OCI-LY7 (cell line): ENCODE measurements at regions of chr1 and their contacts with region 1.

Region 1: GRCh38 chr1:151924679-151925587 is 15.6 kb upstream of the THEM4 start:
- DNase-seq: no peak
- H3K4me3 ChIP-seq: no peak overlapping the region
- H3K27ac ChIP-seq: no peak overlapping the region
- H3K4me1 ChIP-seq: peaks cover 50% of the 10 kb centered on the region
- CTCF ChIP-seq: no peak

Region 2: GRCh38 chr1:151847842-151848596 is 76.9 kb before region 1 on chr1:
- CTCF ChIA-PET with region 1: no interaction called
- POLR2A ChIA-PET with region 1: no interaction called
- intact Hi-C with region 1: loop called (anchors 2 kb)
- DNase-seq: no peak
- H3K4me3 ChIP-seq: no peak overlapping the region
- H3K27ac ChIP-seq: no peak overlapping the region
- H3K4me1 ChIP-seq: peaks cover 19% of the 10 kb centered on the region
- CTCF ChIP-seq: no peak

Region 3: DNA sequence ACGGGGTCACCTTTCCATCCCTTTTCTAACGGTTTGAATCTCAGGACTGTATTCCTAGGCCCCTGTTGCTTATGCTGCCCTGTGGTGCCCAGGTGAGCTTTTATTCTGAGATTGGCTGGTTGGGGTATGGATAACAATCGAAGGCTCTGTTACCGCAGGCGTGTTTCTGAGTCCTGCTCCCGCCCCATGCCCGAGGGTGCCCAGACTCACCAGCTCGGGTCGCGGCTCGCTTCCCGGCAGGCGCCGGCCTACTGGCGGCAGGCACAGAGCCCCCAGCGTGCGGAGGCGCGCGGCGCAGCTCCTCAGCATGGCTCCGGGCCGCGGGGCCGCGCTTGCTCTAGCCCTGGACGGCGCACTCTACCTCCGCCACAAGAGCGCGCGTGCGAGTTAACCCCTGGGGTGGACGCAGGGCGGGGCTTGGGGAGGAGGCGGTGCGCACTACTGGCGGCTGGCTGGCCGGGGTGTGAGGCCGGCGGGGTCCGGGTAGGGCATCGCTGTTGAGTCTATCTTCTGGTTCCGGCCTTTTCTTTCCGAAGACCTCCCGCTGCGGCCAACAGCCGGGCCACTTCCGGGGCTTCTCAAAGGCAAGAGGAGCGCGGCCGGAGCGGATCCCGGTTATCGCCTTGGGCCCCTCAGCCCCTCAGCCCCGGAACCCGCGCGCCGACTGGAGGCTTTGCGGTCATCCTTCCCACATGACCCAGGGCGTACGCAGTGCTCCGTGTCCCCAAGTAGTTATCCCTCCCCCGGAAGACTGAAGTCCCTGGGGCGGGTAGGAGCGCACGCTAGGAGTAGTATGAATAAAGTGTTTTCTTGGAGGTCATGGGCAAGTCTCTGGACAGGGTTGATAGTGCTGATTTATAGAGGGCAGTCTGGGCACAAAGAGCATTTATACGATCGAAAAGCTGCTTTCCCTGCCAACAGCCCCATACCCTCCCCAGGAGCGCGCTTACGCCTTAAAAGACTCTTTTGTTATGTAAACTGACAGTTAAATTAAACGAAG is 15.5 kb before region 1 on chr1 and contains the start of gene THEM4:
- CTCF ChIA-PET with region 1: interaction called, 5 read pairs
- POLR2A ChIA-PET with region 1: interaction called, 18 read pairs
- intact Hi-C with region 1: loop called (anchors 2 kb)
- DNase-seq: peak; percentile 93
- H3K4me3 ChIP-seq: peak within 1 kb of the TSS; percentile 70
- H3K27ac ChIP-seq: peak within 1 kb of the TSS; percentile 26
- H3K4me1 ChIP-seq: peaks cover 11% of the 10 kb centered on the region
- CTCF ChIP-seq: peak; percentile 47
- total RNA-seq, gene THEM4: 7.2 TPM in 2 replicates